ENCODE measurements at regions of chr11 and their contacts with region 1.

Region 1: DNA sequence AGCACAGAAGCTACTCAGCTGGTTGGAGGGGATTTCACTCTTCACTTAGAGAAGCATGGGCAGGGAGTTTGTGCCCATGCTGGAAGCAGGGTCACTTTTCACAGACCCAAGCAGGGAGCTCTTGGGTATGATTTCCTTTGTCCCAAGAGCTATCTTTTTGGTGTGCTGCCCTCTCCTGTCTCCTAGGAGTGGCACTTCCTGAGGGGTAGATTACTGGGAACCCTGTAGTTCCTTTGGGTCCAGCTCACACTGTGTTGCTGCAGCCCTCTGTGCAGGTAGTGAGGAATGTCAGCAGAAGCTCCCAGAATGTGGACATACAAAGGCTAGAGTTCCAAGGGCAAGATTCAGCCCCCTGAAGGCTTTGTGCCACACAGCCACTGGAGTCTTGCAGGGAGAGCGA is 537.1 kb upstream of the ANO3 start:
- H3K4me3 Mint-ChIP-seq: no peak overlapping the region
- H3K27ac Mint-ChIP-seq: no peak overlapping the region
- H3K4me1 Mint-ChIP-seq: no peaks in the 10 kb centered on the region
- H3K27me3 Mint-ChIP-seq: no peaks in the 10 kb centered on the region

Region 2: DNA sequence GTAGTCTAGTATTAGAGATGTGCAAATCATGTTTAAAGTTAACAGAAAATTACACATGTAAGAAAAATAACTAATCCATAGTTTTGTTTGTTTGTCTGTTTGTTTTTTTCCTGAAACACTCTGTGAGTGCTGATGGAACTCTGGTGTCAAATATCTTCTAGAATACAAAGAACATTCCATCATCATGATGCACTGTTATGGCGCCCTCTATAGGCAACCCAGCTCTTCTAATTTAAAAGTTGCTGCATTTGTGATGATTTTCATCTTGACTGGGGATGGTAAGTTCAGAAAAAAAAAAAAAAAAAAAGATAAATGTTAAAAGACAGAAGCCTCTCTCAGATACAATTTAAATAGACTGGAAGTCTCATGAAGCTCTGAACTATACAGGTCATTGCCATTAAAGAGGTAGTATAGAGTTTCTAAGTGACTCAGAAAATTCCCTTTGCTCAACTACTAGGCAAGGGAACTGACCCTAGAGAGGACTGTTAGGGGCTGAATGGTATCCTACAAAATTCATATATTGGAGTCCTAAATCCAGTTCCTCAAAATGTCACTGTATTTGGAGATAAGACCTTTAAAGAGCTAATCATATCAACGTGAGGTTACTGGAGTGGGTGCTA is 60.1 kb before region 1 on chr11:
- intact Hi-C with region 1: loop called (anchors 10 kb)
- H3K4me3 Mint-ChIP-seq: no peak overlapping the region
- H3K27ac Mint-ChIP-seq: no peak overlapping the region
- H3K4me1 Mint-ChIP-seq: no peaks in the 10 kb centered on the region
- H3K27me3 Mint-ChIP-seq: no peaks in the 10 kb centered on the region

Region 3: GRCh38 chr11:25899761-25900160 is 105.0 kb after region 1 on chr11:
- intact Hi-C with region 1: no loop called
- H3K4me3 Mint-ChIP-seq: no peak overlapping the region
- H3K27ac Mint-ChIP-seq: no peak overlapping the region
- H3K4me1 Mint-ChIP-seq: no peaks in the 10 kb centered on the region
- H3K27me3 Mint-ChIP-seq: no peaks in the 10 kb centered on the region

Region 4: GRCh38 chr11:25943777-25944661 is 149.2 kb after region 1 on chr11:
- intact Hi-C with region 1: no loop called
- H3K4me3 Mint-ChIP-seq: no peak overlapping the region
- H3K27ac Mint-ChIP-seq: no peak overlapping the region
- H3K4me1 Mint-ChIP-seq: no peaks in the 10 kb centered on the region
- H3K27me3 Mint-ChIP-seq: no peaks in the 10 kb centered on the region

Measured in dendritic cell treated with granulocyte-macrophage colony-stimulating factor and Interleukin-4, amounts not matched to agents 40 ng/mL and 50 ng/mL, for 4 days (primary cell).